Adrenal gland (tissue), 19 donors: ENCODE measurements at regions of chr5 and their contacts with region 1.

Region 1: DNA sequence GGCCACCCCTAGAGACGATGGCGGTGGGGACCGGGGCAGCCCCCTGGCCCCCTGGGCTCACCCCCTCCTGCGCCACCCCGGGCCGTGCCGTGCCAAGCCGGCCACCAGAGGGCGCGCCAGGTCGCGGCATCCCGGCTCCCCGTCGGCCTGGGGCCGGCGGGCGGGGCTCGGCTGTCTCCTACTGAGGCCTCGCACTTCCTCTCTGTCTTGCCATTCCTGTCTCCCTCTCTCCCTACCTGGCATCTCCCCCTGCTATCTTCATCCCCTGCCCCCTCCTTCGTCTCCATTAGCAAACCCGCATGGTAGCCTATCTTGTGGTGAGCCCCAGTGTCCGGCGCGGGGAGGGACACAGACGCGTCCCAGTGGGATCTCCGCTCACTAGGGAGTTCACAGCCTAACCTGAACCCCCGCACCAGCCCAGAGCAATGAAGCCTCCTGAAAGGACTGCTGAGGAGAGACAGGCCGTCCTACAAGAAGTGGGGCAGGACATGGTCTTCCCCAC is 29.8 kb upstream of the FABP6 start:
- DNase-seq: peak; percentile 59 to 80 (median 73)
- H3K4me3 ChIP-seq: peak overlapping the region in 2 of 4 donors; percentile 27 to 45
- H3K27ac ChIP-seq: peak overlapping the region in 1 of 5 donors; percentile 3
- H3K4me1 ChIP-seq: peaks cover 6 to 22% of the 10 kb centered on the region in 2 donors
- H3K27me3 ChIP-seq: no peaks in the 10 kb centered on the region
- CTCF ChIP-seq: peak; percentile 62 to 98 (median 82)
- POLR2A ChIP-seq: no peak

Region 2: GRCh38 chr5:160021831-160022446 is 177.5 kb before region 1 on chr5:
- intact Hi-C with region 1: loop called (anchors 10 kb)
- DNase-seq: peak; percentile 41 to 75 (median 56)
- H3K4me3 ChIP-seq: no peak overlapping the region
- H3K27ac ChIP-seq: no peak overlapping the region
- H3K4me1 ChIP-seq: peaks cover 0 to 16% of the 10 kb centered on the region in 2 donors
- H3K27me3 ChIP-seq: no peaks in the 10 kb centered on the region
- CTCF ChIP-seq: peak; percentile 67 to 87 (median 84)
- POLR2A ChIP-seq: no peak

Region 3: GRCh38 chr5:160071516-160071915 is 127.9 kb before region 1 on chr5:
- intact Hi-C with region 1: loop called in 1 of 2 experiments (anchors 10 kb)
- DNase-seq: peak in 3 of 7 donors; percentile 14 to 59 (median 30)
- H3K4me3 ChIP-seq: no peak overlapping the region
- H3K27ac ChIP-seq: peak overlapping the region in 1 of 5 donors; percentile 44
- H3K4me1 ChIP-seq: peaks cover 0 to 11% of the 10 kb centered on the region in 2 donors
- H3K27me3 ChIP-seq: no peaks in the 10 kb centered on the region
- CTCF ChIP-seq: no peak
- POLR2A ChIP-seq: no peak

Region 4: GRCh38 chr5:160082614-160083500 is 116.6 kb before region 1 on chr5:
- intact Hi-C with region 1: loop called (anchors 10 kb)
- DNase-seq: no peak
- H3K4me3 ChIP-seq: no peak overlapping the region
- H3K27ac ChIP-seq: peak overlapping the region in 1 of 5 donors; percentile 40
- H3K4me1 ChIP-seq: no peaks in the 10 kb centered on the region
- H3K27me3 ChIP-seq: no peaks in the 10 kb centered on the region
- CTCF ChIP-seq: no peak
- POLR2A ChIP-seq: no peak

Region 5: DNA sequence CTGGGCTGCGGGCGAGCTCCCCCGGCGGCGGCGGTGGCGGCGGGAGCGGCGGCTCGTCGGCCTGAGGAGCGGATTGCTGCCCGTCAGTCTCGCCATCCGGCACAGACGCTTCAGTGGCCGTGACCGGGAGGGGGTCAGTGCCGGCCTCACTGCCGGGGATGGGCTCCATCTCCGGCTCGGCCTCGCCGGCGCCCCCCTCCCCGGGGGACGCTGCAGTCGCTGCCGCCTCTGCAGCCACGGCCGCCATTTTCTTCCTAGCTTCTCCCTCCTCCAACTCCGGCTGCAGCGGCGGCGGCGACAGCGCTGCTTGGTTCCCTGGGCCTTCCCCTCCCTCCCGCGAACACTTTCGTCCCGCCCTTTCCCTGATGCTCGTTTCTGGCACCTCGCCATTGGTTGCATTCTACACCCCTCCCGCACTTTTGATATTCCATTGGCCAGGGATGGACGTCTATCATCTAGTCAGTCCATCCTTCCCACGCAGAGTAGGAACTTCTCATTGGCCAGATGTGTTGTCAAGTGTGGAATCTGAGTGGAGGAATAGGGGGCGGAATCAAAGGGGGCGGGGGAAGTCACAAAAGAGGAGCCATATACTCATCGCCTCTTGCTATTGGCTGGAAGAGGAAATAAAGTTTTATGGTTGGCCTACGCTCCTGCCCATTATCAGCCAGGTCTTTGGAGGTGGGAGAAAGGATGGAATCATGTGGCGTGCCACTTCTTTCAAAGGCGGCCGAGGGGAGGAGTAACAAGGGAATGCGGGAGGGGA is 80.1 kb before region 1 on chr5 and contains the start of gene PWWP2A:
- intact Hi-C with region 1: loop called in 1 of 2 experiments (anchors 5 kb)
- DNase-seq: peak; percentile 99 to 100 (median 100)
- H3K4me3 ChIP-seq: peak within 1 kb of the TSS; percentile 65 to 93 (median 79)
- H3K27ac ChIP-seq: peak within 1 kb of the TSS; percentile 78 to 98 (median 96)
- H3K4me1 ChIP-seq: peaks cover 6 to 9% of the 10 kb centered on the region in 2 donors
- H3K27me3 ChIP-seq: no peaks in the 10 kb centered on the region
- CTCF ChIP-seq: peak in 3 of 6 experiments; percentile 22 to 33 (median 28)
- POLR2A ChIP-seq: peak; percentile 84 to 95
- total RNA-seq, gene PWWP2A: 16.9 to 32.9 (median 23.3) TPM

Region 6: DNA sequence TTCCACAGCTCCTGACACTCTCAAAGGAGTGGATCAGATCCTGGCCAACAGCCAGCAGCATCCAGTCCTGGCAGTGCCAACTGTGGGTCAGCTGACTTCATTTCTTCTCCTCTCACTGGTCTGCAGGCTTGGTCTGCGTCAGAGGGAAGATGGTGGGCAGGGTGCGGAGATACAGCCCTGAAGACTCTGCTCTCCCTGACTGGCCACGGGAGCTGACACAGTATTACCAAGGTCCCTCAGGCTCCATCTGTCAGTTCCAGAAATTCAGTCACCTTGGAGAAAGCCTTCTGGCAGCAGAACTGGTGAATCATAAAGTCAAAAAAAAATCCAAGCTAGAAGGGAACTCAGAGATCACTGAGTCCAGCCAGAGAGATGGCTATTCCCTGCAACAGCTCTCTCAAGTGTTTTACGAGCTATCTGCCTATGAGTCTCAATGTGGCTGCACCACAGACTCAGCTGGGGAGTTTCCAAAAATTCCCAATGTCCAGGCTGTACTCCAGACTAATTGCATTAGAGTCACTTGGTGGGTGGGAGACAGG is 143.0 kb after region 1 on chr5:
- intact Hi-C with region 1: loop called (anchors 2 kb)
- DNase-seq: peak; percentile 70 to 93 (median 90)
- H3K4me3 ChIP-seq: no peak overlapping the region
- H3K27ac ChIP-seq: peak overlapping the region; percentile 56 to 89 (median 65)
- H3K4me1 ChIP-seq: peaks cover 22 to 34% of the 10 kb centered on the region in 2 donors
- H3K27me3 ChIP-seq: no peaks in the 10 kb centered on the region
- CTCF ChIP-seq: no peak
- POLR2A ChIP-seq: peak in 1 of 2 donors; percentile 49